ENCODE measurements at regions of chr11 and their contacts with region 1.

Region 1: DNA sequence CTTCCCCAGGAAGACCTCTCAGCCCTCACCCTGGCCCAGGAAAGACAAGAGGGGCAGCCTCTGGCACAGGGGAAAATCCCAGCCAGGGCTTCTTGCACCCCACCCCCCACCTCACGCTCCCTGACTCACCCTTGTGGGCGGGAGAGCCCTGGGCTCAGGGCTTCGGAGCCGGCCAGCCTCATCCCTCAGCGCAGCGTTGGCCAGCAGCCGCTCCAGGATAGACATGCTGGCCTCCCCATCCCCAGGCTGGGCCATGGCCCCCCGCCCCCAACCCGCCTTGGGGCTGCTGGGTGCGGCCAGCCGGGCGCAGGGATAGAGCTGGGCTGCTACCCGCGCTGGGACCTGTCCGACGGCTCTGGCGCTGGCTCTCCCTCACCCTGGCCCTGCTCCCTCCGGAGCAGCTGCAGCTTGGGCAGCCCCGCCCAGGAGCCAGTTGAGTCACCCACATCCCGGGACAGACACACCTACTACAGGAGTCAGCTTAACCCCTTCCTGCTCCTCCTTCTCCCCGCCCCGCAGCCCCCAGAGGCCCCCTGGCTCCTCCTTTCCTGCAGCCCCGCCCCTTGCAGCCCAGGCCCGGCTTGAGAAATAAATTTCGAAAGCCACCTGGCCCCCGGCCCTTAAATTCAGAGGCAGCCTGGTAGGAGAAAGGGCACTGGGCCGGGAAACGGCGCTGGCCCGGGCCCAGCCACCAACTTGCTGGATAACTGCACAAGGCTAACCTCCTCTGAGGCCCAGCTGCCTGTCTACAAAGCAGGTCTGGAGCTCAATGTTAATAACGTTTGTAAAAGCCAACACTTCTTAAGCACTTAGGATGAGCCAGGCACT is 13.4 kb downstream of the TNKS1BP1 start:
- DNase-seq: peak; percentile 95
- H3K4me3 Mint-ChIP-seq: peak overlapping the region; percentile 81
- H3K27ac Mint-ChIP-seq: peak overlapping the region; percentile 71
- H3K4me1 Mint-ChIP-seq: peaks cover 48% of the 10 kb centered on the region
- H3K27me3 Mint-ChIP-seq: no peaks in the 10 kb centered on the region
- CTCF ChIP-seq: no peak

Region 2: DNA sequence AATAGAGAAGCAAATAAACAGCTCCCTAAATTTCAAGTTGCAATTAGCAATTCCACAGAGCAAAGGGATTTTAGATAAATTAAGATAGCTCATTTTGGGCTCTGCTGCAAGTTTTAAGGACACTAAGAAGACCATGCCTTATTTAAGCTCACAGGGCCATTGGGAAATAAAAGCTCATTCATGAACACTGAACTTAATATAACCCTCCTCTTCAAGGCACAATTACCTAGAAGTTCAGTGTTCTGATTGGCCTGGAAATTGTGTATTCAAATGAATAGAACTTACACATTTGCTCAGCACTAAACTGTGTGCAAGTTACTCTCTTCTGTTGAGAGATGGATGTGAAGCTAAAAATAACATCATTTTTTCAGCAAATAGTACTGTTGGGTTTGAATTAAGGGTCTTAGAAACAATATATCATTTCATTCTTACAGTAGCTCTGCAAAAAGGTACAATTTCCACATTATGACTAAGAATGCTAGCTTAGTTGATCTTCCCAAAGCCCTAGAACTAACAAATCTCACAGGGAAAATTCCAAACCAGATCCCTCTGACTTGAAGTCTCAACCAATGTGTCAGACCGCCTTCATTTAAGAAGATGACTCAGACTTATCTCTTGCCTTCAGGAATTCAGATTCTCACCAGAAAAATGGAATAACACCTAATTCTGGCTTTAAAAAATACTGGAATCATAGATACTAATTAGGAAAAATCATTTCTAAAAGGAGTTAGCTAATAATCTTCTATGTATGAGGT is 217.0 kb before region 1 on chr11:
- CTCF ChIA-PET with region 1: no interaction called
- intact Hi-C with region 1: no loop called
- DNase-seq: no peak
- H3K4me3 Mint-ChIP-seq: no peak overlapping the region
- H3K27ac Mint-ChIP-seq: no peak overlapping the region
- H3K4me1 Mint-ChIP-seq: peaks cover 7% of the 10 kb centered on the region
- H3K27me3 Mint-ChIP-seq: no peaks in the 10 kb centered on the region
- CTCF ChIP-seq: no peak

Region 3: GRCh38 chr11:57277845-57278709 is 33.2 kb before region 1 on chr11:
- CTCF ChIA-PET with region 1: interaction called, 4 read pairs
- intact Hi-C with region 1: loop called (anchors 2 kb)
- DNase-seq: peak; percentile 79
- H3K4me3 Mint-ChIP-seq: peak overlapping the region; percentile 53
- H3K27ac Mint-ChIP-seq: peak overlapping the region; percentile 88
- H3K4me1 Mint-ChIP-seq: peaks cover 58% of the 10 kb centered on the region
- H3K27me3 Mint-ChIP-seq: no peaks in the 10 kb centered on the region
- CTCF ChIP-seq: peak; percentile 79

Region 4: GRCh38 chr11:57322256-57323166 is 11.2 kb after region 1 on chr11:
- CTCF ChIA-PET with region 1: interaction called, 17 read pairs
- intact Hi-C with region 1: no loop called
- DNase-seq: peak; percentile 83
- H3K4me3 Mint-ChIP-seq: peak overlapping the region; percentile 86
- H3K27ac Mint-ChIP-seq: peak overlapping the region; percentile 98
- H3K4me1 Mint-ChIP-seq: peaks cover 56% of the 10 kb centered on the region
- H3K27me3 Mint-ChIP-seq: no peaks in the 10 kb centered on the region
- CTCF ChIP-seq: no peak

Region 5: GRCh38 chr11:57444362-57445121 is 133.2 kb after region 1 on chr11:
- CTCF ChIA-PET with region 1: no interaction called
- intact Hi-C with region 1: no loop called
- DNase-seq: no peak
- H3K4me3 Mint-ChIP-seq: no peak overlapping the region
- H3K27ac Mint-ChIP-seq: no peak overlapping the region
- H3K4me1 Mint-ChIP-seq: peaks cover 21% of the 10 kb centered on the region
- H3K27me3 Mint-ChIP-seq: peaks cover 22% of the 10 kb centered on the region
- CTCF ChIP-seq: no peak

Measured in Calu3 (cell line).